ENCODE measurements at regions of chr18 and their contacts with region 1.

Region 1: GRCh38 chr18:14086458-14087231 is 45.6 kb downstream of the ZNF519 start:
- DNase-seq: peak in 3 of 10 donors; percentile 29 to 45 (median 38)
- H3K4me3 ChIP-seq: peak overlapping the region in 4 of 59 donors; percentile 12 to 31 (median 14)
- H3K27ac ChIP-seq: no peak overlapping the region
- H3K27me3 ChIP-seq: no peaks in the 10 kb centered on the region
- CTCF ChIP-seq: peak; percentile 44 to 86 (median 72)

Region 2: DNA sequence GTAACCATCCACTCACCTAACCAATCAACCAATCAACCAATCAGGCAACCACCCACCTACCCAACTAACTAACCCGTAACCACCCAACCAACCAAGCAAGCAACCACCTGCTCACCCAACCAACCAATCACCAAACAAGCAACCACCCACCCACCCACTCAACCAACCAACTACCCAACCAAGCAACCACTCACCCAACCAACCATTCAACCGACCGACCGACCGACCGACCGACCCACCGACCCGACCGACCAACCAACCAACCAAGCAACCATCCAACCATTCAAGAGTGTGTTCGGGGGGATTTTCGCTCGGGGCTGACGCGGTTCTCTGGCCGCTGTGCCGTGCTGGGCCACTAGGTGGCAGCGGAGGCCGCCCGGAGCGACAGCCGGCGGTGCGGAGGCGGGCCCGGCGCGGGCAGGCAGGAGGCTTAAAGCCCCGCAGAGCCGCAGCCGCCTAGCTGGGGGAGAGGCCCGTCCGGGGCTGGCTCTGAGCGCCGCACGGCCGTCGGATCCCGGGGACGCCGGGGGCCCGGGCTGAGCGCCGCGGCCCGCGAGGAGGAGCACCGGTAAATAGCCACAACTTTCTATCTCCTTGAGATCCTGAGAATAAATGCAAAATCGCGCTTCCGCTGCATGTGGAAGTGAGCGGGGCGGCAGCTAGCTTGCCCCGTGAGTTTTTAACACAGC is 262.8 kb before region 1 on chr18 and contains the start of gene MC5R:
- intact Hi-C with region 1: loop called (anchors 2 kb)
- DNase-seq: peak; percentile 24 to 84 (median 62)
- H3K4me3 ChIP-seq: peak within 1 kb of the TSS; percentile 28 to 78 (median 57)
- H3K27ac ChIP-seq: no peak within 1 kb of the TSS
- H3K27me3 ChIP-seq: peaks cover 0 to 12% (median 0%) of the 10 kb centered on the region in 45 donors
- CTCF ChIP-seq: peak; percentile 14 to 93 (median 82)
- total RNA-seq, gene MC5R: 0.24 to 1.2 (median 0.48) TPM in 51 of 120 experiments, not detected in the others

Region 3: DNA sequence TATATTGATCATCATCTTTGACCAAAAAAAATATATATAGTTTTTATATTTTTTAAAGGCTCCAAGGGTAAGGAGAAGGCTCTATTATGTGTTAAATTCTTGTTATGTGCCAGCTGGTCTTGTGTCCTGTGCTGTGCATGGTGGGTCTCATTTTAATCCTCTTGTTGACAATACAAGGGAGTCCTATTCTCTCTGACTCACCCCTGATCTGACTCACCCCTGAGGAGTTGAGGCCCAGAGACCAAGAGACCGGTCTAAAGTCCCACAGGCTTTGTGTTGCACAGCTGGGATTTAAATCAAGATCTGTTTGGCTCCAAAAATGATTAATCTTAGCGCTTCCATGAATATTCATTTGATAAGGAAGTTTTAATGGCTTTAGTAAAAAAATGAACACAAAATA is 197.0 kb before region 1 on chr18:
- intact Hi-C with region 1: loop called in 1 of 2 experiments (anchors 10 kb)
- DNase-seq: no peak
- H3K4me3 ChIP-seq: no peak overlapping the region
- H3K27ac ChIP-seq: no peak overlapping the region
- H3K27me3 ChIP-seq: peaks cover 0 to 21% (median 0%) of the 10 kb centered on the region in 45 donors
- CTCF ChIP-seq: no peak

Region 4: DNA sequence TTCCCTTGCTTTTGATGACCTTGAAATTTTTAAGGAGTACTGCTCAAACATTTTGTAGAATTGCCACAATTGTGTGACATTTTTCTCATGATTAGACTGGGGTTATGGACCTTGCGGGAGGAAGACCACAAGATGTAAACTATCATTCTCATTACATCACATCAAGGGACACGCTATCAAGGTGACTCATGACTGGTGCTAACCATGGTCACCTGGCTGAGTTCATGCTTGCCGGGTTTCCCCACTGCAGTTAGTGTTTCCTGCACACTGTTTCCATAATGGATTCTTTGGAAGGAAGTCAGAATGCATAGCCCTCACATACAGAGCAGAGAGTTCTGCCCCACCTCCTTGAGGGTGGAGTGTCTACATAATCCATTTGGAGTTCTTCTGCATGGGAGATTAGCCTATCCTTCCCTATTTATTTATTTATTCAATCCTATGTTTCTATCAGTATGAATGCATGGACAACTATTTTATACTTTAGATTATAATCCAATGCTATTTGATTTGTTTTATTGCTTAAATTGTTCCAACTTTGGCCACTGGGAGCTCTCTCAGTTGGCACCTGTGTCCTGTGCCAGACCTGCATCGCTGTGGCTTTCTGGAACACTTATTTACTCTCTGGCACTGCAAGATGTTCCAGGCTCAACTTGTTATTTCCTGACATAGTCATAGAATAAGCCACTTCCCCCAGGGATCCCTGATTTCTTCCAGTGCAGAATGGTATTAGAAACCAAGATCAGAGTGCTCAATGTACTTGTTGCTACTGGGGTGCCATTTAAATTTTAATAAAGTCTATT is 177.3 kb before region 1 on chr18:
- intact Hi-C with region 1: no loop called
- DNase-seq: no peak
- H3K4me3 ChIP-seq: no peak overlapping the region
- H3K27ac ChIP-seq: no peak overlapping the region
- H3K27me3 ChIP-seq: no peaks in the 10 kb centered on the region
- CTCF ChIP-seq: no peak

Region 5: DNA sequence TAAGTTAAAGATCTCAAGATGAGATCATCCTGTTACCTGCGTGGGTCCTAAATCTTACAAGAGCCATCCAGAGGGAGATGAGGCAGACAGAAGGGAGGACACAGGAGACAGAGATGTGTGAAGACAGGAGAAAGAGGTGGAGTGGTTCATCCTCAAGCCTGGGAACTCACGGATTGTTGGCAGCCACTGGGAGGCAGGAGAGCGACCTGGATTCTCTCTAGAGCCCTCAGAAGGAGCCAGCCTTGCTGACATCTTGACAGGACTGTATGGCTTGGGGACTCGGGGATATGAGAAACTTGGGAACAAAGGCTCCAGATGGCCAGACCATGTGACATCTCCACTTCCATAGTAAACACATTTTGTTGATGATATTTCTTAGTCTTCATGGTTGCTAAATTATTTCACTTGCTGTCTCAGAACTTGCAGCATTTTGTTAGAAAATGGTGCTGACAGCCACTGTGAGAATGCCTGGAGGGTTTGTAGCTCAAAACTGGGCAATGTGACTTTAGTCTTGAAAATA is 113.5 kb before region 1 on chr18:
- intact Hi-C with region 1: loop called in 1 of 2 experiments (anchors 5 kb)
- DNase-seq: peak in 3 of 10 donors; percentile 6 to 45 (median 19)
- H3K4me3 ChIP-seq: no peak overlapping the region
- H3K27ac ChIP-seq: no peak overlapping the region
- H3K27me3 ChIP-seq: no peaks in the 10 kb centered on the region
- CTCF ChIP-seq: peak in 5 of 56 donors; percentile 9 to 26 (median 14)

Region 6: GRCh38 chr18:13989199-13989598 is 97.4 kb before region 1 on chr18:
- intact Hi-C with region 1: loop called in 1 of 2 experiments (anchors 5 kb)
- DNase-seq: no peak
- H3K4me3 ChIP-seq: no peak overlapping the region
- H3K27ac ChIP-seq: no peak overlapping the region
- H3K27me3 ChIP-seq: peaks cover 0 to 3% (median 0%) of the 10 kb centered on the region in 45 donors
- CTCF ChIP-seq: no peak

Region 7: GRCh38 chr18:14124689-14125088 is 38.0 kb after region 1 on chr18:
- intact Hi-C with region 1: no loop called
- DNase-seq: no peak
- H3K4me3 ChIP-seq: no peak overlapping the region
- H3K27ac ChIP-seq: no peak overlapping the region
- H3K27me3 ChIP-seq: no peaks in the 10 kb centered on the region
- CTCF ChIP-seq: no peak

Region 8: GRCh38 chr18:14179305-14179704 is 92.7 kb after region 1 on chr18:
- intact Hi-C with region 1: no loop called
- DNase-seq: no peak
- H3K4me3 ChIP-seq: peak overlapping the region in 58 of 59 donors; percentile 11 to 75 (median 57)
- H3K27ac ChIP-seq: peak overlapping the region in 1 of 59 donors; percentile 48
- H3K27me3 ChIP-seq: no peaks in the 10 kb centered on the region
- CTCF ChIP-seq: no peak